ENCODE measurements at regions of chr2 and their contacts with region 1.

Region 1: GRCh38 chr2:50606860-50607259 is 425.1 kb downstream of the NRXN1 start:
- DNase-seq: peak; percentile 41
- ATAC-seq: no peak
- H3K4me3 ChIP-seq: no peak overlapping the region
- H3K27ac ChIP-seq: no peak overlapping the region
- H3K4me1 ChIP-seq: no peaks in the 10 kb centered on the region
- H3K27me3 ChIP-seq: no peaks in the 10 kb centered on the region
- CTCF ChIP-seq: peak; percentile 61

Region 2: DNA sequence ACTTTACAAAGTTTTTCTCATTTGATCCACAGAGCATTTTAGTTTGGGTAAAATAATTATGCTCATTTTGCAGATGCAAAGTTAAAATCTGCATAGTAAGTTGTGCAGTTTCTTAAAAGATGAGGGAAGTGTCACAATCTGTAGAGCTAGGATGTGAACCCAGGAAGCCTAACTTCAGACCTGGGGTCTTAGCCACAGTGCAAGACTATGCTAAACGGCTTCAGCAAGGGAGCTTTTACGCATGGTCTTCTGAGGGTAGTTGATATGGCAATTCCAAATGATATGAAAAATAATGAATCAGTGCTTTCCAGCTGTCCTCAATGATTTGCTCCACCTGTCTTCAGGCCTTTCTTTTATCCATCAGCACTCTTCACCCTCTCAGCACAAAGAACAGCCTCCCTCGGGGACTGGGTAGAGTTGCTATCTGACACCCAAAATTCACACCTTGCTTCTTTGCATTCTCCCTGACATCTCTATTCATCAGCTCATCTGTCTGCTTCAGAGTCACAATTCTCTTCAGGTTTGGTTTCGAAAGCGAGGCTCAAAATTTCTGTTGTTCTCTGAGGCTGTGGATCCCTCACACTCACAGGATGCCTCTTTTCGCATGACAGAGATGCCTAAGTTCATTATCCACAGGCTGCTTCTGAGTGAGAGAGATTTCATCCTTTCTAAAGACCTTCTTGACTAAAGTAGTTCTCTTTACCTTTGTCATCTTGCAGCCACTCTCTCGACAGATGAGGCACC is 122.6 kb after region 1 on chr2:
- CTCF ChIA-PET with region 1: no interaction called
- POLR2A ChIA-PET with region 1: no interaction called
- intact Hi-C with region 1: loop called (anchors 10 kb)
- DNase-seq: no peak
- ATAC-seq: no peak
- H3K4me3 ChIP-seq: no peak overlapping the region
- H3K27ac ChIP-seq: no peak overlapping the region
- H3K4me1 ChIP-seq: no peaks in the 10 kb centered on the region
- H3K27me3 ChIP-seq: no peaks in the 10 kb centered on the region
- CTCF ChIP-seq: no peak

Region 3: GRCh38 chr2:50777954-50778353 is 171.1 kb after region 1 on chr2:
- CTCF ChIA-PET with region 1: no interaction called
- POLR2A ChIA-PET with region 1: no interaction called
- intact Hi-C with region 1: no loop called
- DNase-seq: no peak
- ATAC-seq: no peak
- H3K4me3 ChIP-seq: no peak overlapping the region
- H3K27ac ChIP-seq: no peak overlapping the region
- H3K4me1 ChIP-seq: no peaks in the 10 kb centered on the region
- H3K27me3 ChIP-seq: no peaks in the 10 kb centered on the region
- CTCF ChIP-seq: no peak